Activated naive CD4-positive, alpha-beta T cell treated with anti-CD3 and anti-CD28 coated beads for 36 hours (primary cell): ENCODE measurements at regions of chr6 and their contacts with region 1.

Region 1: DNA sequence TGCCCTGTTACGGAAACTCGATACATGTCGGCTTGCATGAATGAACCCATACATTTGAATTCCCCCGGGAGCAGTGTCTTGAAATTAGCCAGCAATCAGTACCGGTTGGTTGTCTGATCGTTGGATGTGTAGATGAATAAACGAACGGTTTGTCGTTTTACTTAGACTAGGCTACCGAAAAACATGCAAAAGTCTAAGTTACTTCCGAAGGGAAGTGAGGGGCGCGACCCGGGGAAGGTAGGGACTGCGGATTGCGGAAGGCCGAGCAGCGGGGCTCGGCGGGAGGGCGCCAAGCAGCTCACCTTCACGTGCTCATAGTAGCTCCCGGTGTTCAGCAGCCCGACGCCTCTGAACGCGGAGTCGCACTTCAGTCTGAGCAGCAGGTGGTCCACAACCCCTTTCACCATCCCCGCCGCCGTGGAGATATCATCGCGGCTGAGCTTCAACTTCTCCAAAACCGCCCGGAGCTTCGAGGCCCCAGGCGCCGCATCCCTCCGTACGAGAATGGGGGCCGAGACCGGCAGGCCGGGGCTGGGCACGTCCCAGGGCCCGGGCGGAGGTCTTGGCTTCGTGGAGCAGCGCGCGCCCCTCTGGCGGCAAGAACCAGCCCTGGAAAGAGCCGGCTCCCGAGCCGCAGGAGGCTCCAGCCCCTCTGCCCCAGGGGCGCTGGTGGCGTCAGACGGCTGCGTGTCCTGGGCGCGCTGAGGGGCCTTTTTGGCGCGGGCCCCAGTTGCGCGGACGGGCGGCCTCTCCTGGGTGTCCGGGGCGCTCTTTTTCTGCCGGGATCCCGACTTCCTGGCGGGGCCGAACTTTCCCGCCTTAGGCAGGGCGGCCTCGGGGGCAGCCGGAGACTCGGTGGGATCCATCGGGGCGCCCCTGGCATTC is 632 bp downstream of the CGAS start:
- DNase-seq: peak; percentile 60
- H3K4me3 Mint-ChIP-seq: peak overlapping the region; percentile 90
- H3K27ac Mint-ChIP-seq: peak overlapping the region; percentile 86
- H3K4me1 Mint-ChIP-seq: peaks cover 35% of the 10 kb centered on the region
- H3K27me3 Mint-ChIP-seq: no peaks in the 10 kb centered on the region

Region 2: GRCh38 chr6:73262671-73263569 is 188.5 kb before region 1 on chr6 and contains the start of gene KHDC1:
- CTCF ChIA-PET with region 1: no interaction called
- intact Hi-C with region 1: loop called (anchors 1 kb)
- DNase-seq: peak; percentile 65
- H3K4me3 Mint-ChIP-seq: peak within 1 kb of the TSS; percentile 80
- H3K27ac Mint-ChIP-seq: peak within 1 kb of the TSS; percentile 56
- H3K4me1 Mint-ChIP-seq: peaks cover 30% of the 10 kb centered on the region
- H3K27me3 Mint-ChIP-seq: no peaks in the 10 kb centered on the region
- total RNA-seq, gene KHDC1: 1.1 to 1.6 TPM

Region 3: GRCh38 chr6:73461537-73462350 is 10.3 kb after region 1 on chr6 and contains the start of gene MTO1:
- CTCF ChIA-PET with region 1: interaction called, 6 read pairs
- intact Hi-C with region 1: loop called (anchors 1 kb)
- DNase-seq: peak; percentile 92
- H3K4me3 Mint-ChIP-seq: peak within 1 kb of the TSS; percentile 94
- H3K27ac Mint-ChIP-seq: peak within 1 kb of the TSS; percentile 97
- H3K4me1 Mint-ChIP-seq: peaks cover 37% of the 10 kb centered on the region
- H3K27me3 Mint-ChIP-seq: no peaks in the 10 kb centered on the region
- total RNA-seq, gene MTO1: 38.7 to 47.1 TPM

Region 4: GRCh38 chr6:73585566-73586415 is 134.3 kb after region 1 on chr6:
- CTCF ChIA-PET with region 1: no interaction called
- intact Hi-C with region 1: loop called (anchors 5 kb)
- DNase-seq: peak; percentile 70
- H3K4me3 Mint-ChIP-seq: peak overlapping the region; percentile 78
- H3K27ac Mint-ChIP-seq: peak overlapping the region; percentile 99
- H3K4me1 Mint-ChIP-seq: peaks cover 36% of the 10 kb centered on the region
- H3K27me3 Mint-ChIP-seq: no peaks in the 10 kb centered on the region